ENCODE measurements at regions of chr11 and their contacts with region 1.

Region 1: GRCh38 chr11:35082321-35083182 is 56.4 kb upstream of the CD44 start:
- H3K4me3 Mint-ChIP-seq: peak overlapping the region; percentile 71
- H3K27ac Mint-ChIP-seq: peak overlapping the region; percentile 99
- H3K4me1 Mint-ChIP-seq: peaks cover 79% of the 10 kb centered on the region
- H3K27me3 Mint-ChIP-seq: no peaks in the 10 kb centered on the region

Region 2: GRCh38 chr11:34068111-34068510 is 1014.4 kb before region 1 on chr11:
- intact Hi-C with region 1: no loop called
- H3K4me3 Mint-ChIP-seq: no peak overlapping the region
- H3K27ac Mint-ChIP-seq: peak overlapping the region; percentile 65
- H3K4me1 Mint-ChIP-seq: peaks cover 30% of the 10 kb centered on the region
- H3K27me3 Mint-ChIP-seq: no peaks in the 10 kb centered on the region

Region 3: GRCh38 chr11:35006389-35007128 is 76.0 kb before region 1 on chr11:
- intact Hi-C with region 1: loop called (anchors 2 kb)
- H3K4me3 Mint-ChIP-seq: no peak overlapping the region
- H3K27ac Mint-ChIP-seq: peak overlapping the region; percentile 73
- H3K4me1 Mint-ChIP-seq: peaks cover 44% of the 10 kb centered on the region
- H3K27me3 Mint-ChIP-seq: no peaks in the 10 kb centered on the region

Region 4: GRCh38 chr11:35040221-35040942 is 42.2 kb before region 1 on chr11:
- intact Hi-C with region 1: loop called (anchors 5 kb)
- H3K4me3 Mint-ChIP-seq: peak overlapping the region; percentile 25
- H3K27ac Mint-ChIP-seq: peak overlapping the region; percentile 58
- H3K4me1 Mint-ChIP-seq: peaks cover 61% of the 10 kb centered on the region
- H3K27me3 Mint-ChIP-seq: no peaks in the 10 kb centered on the region

Region 5: DNA sequence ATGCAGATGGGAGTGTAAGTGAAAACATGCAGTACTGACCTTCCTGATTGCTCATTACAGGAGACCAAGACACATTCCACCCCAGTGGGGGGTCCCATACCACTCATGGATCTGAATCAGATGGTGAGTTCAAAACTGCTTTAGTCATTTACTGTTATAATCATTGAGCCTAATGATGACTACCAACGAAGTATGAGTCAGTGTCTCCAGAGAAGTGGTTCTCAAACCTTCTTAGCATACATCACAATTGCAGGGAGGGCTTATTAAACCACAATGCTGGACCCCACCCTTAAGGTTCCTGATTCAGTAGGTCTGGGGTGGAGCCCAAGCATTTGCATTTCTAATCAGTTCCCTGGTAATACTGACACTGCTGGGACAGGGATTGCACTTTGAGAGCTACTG is 132.2 kb after region 1 on chr11:
- intact Hi-C with region 1: loop called (anchors 10 kb)
- H3K4me3 Mint-ChIP-seq: peak overlapping the region; percentile 23
- H3K27ac Mint-ChIP-seq: peak overlapping the region; percentile 97
- H3K4me1 Mint-ChIP-seq: peaks cover 68% of the 10 kb centered on the region
- H3K27me3 Mint-ChIP-seq: no peaks in the 10 kb centered on the region

Region 6: GRCh38 chr11:35257281-35257680 is 174.7 kb after region 1 on chr11:
- intact Hi-C with region 1: no loop called
- H3K4me3 Mint-ChIP-seq: no peak overlapping the region
- H3K27ac Mint-ChIP-seq: peak overlapping the region; percentile 30
- H3K4me1 Mint-ChIP-seq: peaks cover 15% of the 10 kb centered on the region
- H3K27me3 Mint-ChIP-seq: no peaks in the 10 kb centered on the region